ENCODE measurements at regions of chr11 and their contacts with region 1.

Region 1: GRCh38 chr11:61187505-61188130 is 15.7 kb upstream of the PGA3 start:
- DNase-seq: peak; percentile 89
- ATAC-seq: peak; percentile 98
- H3K4me3 ChIP-seq: no peak overlapping the region
- H3K4me3 Mint-ChIP-seq: no peak overlapping the region
- H3K27ac ChIP-seq: no peak overlapping the region
- H3K27ac Mint-ChIP-seq: no peak overlapping the region
- H3K4me1 ChIP-seq: no peaks in the 10 kb centered on the region
- H3K4me1 Mint-ChIP-seq: peaks cover 3% of the 10 kb centered on the region
- H3K27me3 ChIP-seq: no peaks in the 10 kb centered on the region
- H3K27me3 Mint-ChIP-seq: peaks cover 5% of the 10 kb centered on the region
- CTCF ChIP-seq: peak; percentile 99

Region 2: DNA sequence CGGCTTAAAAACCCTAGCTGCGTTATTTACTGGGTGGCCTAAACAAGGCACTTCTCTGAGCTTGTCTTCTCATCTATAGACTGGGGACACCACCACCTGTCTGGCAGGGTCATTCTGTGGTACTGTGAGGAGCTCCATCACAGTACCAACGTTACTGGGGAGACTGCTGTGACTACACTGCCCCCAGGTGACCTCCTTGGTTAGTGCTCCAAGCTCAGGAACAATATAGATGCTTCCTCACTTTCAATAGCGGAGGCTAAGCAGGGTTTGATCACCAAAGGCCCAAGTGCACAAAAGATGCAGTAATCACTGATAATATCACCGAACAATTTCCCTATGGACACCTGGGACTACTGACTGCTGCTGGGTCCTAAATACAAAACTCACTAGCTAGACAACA is 300.1 kb before region 1 on chr11:
- CTCF ChIA-PET with region 1: interaction called, 10 read pairs
- POLR2A ChIA-PET with region 1: no interaction called
- intact Hi-C with region 1: no loop called
- DNase-seq: peak; percentile 30
- ATAC-seq: no peak
- H3K4me3 ChIP-seq: no peak overlapping the region
- H3K4me3 Mint-ChIP-seq: no peak overlapping the region
- H3K27ac ChIP-seq: no peak overlapping the region
- H3K27ac Mint-ChIP-seq: no peak overlapping the region
- H3K4me1 ChIP-seq: no peaks in the 10 kb centered on the region
- H3K4me1 Mint-ChIP-seq: no peaks in the 10 kb centered on the region
- H3K27me3 ChIP-seq: no peaks in the 10 kb centered on the region
- H3K27me3 Mint-ChIP-seq: no peaks in the 10 kb centered on the region
- CTCF ChIP-seq: no peak

Region 3: DNA sequence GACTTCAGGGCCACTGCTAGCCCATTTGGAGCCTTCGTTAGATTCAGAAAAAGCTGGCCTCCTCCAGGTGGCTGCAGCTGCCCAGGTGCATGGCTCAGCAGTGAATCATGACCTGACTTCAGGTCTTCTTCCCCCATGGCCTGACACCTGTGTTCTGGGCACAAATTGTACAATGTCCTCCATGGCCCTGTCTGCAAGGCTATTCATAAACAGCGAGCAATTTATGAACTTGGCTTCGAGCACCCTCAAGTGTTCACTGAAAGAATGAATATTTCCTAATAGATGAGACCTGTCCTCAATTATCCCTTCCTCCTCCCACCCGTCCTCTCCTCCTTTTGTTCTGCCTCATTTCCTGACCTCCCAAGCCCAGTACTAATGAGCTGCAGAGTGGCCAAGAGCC is 14.2 kb before region 1 on chr11:
- CTCF ChIA-PET with region 1: interaction called, 12 read pairs
- POLR2A ChIA-PET with region 1: no interaction called
- intact Hi-C with region 1: no loop called
- DNase-seq: no peak
- ATAC-seq: no peak
- H3K4me3 ChIP-seq: no peak overlapping the region
- H3K4me3 Mint-ChIP-seq: no peak overlapping the region
- H3K27ac ChIP-seq: no peak overlapping the region
- H3K27ac Mint-ChIP-seq: no peak overlapping the region
- H3K4me1 ChIP-seq: peaks cover 21% of the 10 kb centered on the region in 2 donors
- H3K4me1 Mint-ChIP-seq: peaks cover 23% of the 10 kb centered on the region
- H3K27me3 ChIP-seq: no peaks in the 10 kb centered on the region
- H3K27me3 Mint-ChIP-seq: peaks cover 14% of the 10 kb centered on the region
- CTCF ChIP-seq: no peak

Region 4: GRCh38 chr11:61577732-61578425 is 390.3 kb after region 1 on chr11:
- CTCF ChIA-PET with region 1: no interaction called
- POLR2A ChIA-PET with region 1: no interaction called
- intact Hi-C with region 1: no loop called
- DNase-seq: no peak
- ATAC-seq: no peak
- H3K4me3 ChIP-seq: no peak overlapping the region
- H3K4me3 Mint-ChIP-seq: no peak overlapping the region
- H3K27ac ChIP-seq: no peak overlapping the region
- H3K27ac Mint-ChIP-seq: no peak overlapping the region
- H3K4me1 ChIP-seq: peaks cover 13 to 16% of the 10 kb centered on the region in 2 donors
- H3K4me1 Mint-ChIP-seq: peaks cover 18% of the 10 kb centered on the region
- H3K27me3 ChIP-seq: peaks cover 0 to 39% (median 14%) of the 10 kb centered on the region in 4 experiments
- H3K27me3 Mint-ChIP-seq: peaks cover 45% of the 10 kb centered on the region
- CTCF ChIP-seq: no peak